Activated CD4-positive, alpha-beta T cell treated with anti-CD3 and anti-CD28 coated beads, Interleukin-2, amount 10 ng/mL, durations not matched to agents 24 days and 14 days (primary cell): ENCODE measurements at regions of chr11 and their contacts with region 1.

Region 1: DNA sequence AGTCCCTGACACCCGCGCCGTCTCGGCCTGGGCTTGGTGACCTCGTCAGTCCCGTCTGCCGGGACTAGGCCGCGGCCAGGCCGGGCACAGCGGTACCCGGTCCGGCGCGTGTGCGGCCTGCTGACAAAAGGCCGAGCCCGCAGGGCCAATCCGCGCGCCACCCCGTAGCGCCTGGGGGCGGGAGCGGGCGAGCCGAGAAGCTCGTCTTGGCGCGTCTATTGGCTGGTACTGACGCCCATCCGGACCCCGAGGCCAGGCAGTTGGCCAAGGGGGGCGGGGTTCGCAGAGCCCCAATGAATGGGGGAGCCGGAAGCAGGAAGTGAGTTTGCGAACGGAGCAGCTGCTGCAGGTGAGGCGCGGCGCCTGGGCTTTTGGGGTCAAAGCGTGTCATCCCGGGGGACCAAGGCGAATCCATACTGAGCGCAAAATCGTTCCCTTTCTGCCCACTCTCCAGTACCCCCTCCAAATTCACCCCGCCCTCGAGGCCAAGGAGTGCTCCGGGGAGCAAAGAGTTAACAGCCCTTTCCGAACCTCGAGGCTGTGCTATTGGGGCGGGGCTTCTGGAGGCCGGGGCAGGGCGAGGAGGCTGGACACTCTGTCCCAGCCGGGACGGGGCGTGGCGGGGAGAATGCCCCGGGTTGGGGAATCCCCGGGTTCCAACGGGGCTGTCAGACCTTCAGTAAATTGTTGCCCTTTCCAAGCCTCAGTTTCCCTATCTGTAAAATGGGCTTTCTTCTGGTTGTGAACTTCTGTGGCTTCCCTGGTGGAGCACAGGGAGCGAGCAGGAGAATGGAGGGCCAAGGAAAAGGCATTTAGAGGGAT is at the start of gene DPP3:
- DNase-seq: peak; percentile 99
- H3K4me3 Mint-ChIP-seq: peak within 1 kb of the TSS; percentile 93
- H3K27ac Mint-ChIP-seq: peak within 1 kb of the TSS; percentile 90
- H3K4me1 Mint-ChIP-seq: peaks cover 27% of the 10 kb centered on the region
- H3K27me3 Mint-ChIP-seq: no peaks in the 10 kb centered on the region
- total RNA-seq, gene DPP3: 97.1 and 106 TPM in 2 replicates

Region 2: DNA sequence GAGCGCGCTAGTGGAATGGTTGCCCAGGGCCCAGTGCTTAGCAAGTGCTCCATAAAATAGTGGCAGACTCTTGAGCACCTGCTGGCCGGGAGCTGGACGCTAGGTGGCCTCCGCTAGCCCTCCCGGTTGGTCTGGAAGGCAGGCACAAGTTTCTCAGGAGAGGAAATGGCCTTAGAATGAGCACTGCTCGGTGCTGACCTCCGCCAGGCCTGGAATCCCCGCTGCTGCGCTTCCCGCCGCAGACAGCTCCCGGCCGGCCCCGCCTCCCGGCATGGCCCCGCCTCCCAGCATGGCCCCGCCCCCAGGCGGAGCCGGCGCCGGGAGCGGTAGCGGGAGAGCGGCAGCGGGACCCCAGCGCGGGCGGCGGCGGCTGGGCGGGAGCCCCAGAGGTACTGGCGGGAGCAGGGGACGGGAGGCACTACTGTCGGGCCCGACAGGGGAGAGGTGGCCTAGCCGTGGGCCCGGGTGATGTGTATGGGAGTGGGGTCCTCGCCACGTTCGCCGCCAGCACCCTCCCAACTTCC is 842.5 kb before region 1 on chr11 and contains the start of gene SIPA1:
- intact Hi-C with region 1: no loop called
- DNase-seq: peak; percentile 95
- H3K4me3 Mint-ChIP-seq: peak within 1 kb of the TSS; percentile 84
- H3K27ac Mint-ChIP-seq: peak within 1 kb of the TSS; percentile 89
- H3K4me1 Mint-ChIP-seq: peaks cover 31% of the 10 kb centered on the region
- H3K27me3 Mint-ChIP-seq: no peaks in the 10 kb centered on the region
- total RNA-seq, gene SIPA1: 118 and 125 TPM in 2 replicates

Region 3: DNA sequence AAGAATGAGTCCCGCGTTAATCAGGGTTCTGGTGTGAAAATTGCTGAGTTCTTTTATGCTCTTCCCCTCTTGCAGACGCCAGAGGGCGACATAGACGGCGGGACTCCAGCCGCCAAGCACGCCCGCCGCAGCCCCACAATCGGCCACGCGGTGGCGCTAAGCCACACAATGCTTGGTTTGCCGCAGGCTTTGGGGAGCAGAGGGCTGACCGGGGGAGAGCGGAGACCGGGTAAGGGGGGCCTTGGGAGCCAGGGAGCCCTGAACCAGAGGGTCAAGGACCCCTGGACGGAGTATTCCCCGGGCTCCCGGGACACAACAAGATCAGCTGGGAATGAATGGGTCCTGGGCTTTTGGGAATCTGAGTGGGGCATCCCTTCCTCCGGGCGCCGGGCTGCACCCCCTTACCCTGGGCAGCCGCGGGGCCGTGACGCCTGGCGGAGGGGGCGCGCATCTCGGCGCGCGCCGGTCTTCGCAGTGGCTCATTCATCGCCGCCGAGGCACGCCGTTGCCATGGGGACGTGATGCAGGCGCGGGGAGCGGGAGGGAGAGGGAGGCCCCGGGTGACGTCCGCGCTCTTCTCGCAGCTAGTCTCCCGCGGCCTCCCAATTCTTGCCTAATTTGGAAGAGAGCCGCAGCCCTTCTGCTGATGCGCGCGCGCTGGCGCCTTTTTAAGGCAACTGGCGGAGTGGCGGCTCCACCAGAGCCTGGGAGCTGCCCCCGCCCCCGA is 71.7 kb before region 1 on chr11:
- intact Hi-C with region 1: loop called (anchors 2 kb)
- DNase-seq: peak; percentile 98
- H3K4me3 Mint-ChIP-seq: peak overlapping the region; percentile 88
- H3K27ac Mint-ChIP-seq: peak overlapping the region; percentile 74
- H3K4me1 Mint-ChIP-seq: peaks cover 8% of the 10 kb centered on the region
- H3K27me3 Mint-ChIP-seq: peaks cover 18% of the 10 kb centered on the region

Region 4: GRCh38 chr11:66466225-66467027 is 13.9 kb before region 1 on chr11 and contains the start of gene PELI3:
- intact Hi-C with region 1: loop called (anchors 1 kb)
- DNase-seq: peak; percentile 97
- H3K4me3 Mint-ChIP-seq: peak within 1 kb of the TSS; percentile 92
- H3K27ac Mint-ChIP-seq: peak within 1 kb of the TSS; percentile 84
- H3K4me1 Mint-ChIP-seq: peaks cover 33% of the 10 kb centered on the region
- H3K27me3 Mint-ChIP-seq: no peaks in the 10 kb centered on the region
- total RNA-seq, gene PELI3: 16.1 and 18.3 TPM in 2 replicates

Region 5: GRCh38 chr11:66545701-66546367 is 65.5 kb after region 1 on chr11 and contains the start of gene ZDHHC24:
- intact Hi-C with region 1: loop called (anchors 1 kb)
- DNase-seq: peak; percentile 97
- H3K4me3 Mint-ChIP-seq: peak within 1 kb of the TSS; percentile 89
- H3K27ac Mint-ChIP-seq: peak within 1 kb of the TSS; percentile 80
- H3K4me1 Mint-ChIP-seq: peaks cover 17% of the 10 kb centered on the region
- H3K27me3 Mint-ChIP-seq: peaks cover 13% of the 10 kb centered on the region
- total RNA-seq, gene ZDHHC24: 12.2 and 13.9 TPM in 2 replicates